ENCODE measurements at regions of chr20 and their contacts with region 1.

Region 1: DNA sequence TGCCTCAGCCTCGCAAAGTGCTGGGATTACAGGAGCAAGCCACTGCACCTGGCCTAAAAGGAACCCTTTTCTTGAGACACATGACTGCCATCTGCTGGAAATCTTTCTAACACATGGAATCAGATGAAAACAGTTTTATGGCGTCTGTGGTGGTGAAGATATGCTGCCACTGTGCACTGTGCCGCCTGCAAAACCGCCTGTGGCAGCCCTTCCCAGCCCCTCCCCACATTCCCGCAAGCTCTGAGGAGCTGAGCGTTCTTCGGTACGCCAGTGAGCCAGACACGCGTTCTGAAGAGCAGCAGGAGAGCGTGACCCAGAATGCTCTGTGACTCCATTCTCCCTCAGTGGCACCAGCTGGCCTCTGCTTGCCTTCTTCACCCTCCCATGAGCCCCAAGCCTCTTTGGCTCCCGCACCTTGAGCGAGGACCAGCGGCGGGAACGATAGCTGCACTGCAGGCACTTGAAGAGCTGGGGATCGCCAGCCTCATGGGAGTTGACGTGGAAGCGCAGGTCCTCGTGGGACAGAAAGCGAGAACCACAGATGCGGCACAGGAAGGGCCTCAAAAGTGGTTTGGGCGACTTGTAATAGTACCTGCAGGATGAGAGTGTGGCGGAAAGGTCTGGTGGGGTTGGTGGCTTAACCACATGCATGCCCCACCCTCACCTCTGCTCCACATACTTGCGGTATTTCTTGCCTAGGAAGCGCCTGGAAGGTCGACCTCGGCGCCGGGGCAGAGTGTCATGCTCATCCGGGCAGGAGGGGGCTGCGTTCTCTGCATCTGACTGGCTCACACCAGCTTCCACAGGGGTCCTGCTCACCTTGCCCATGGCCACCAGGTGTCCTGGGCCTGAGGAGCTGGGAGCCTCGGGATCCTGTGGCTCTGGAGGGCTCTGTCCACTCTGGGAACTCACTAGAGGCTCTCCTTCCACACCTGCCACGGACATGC is 8.7 kb downstream of the ZNF335 start:
- DNase-seq: no peak
- ATAC-seq: peak; percentile 43; the same call in 2 of the 3 replicates
- H3K4me3 ChIP-seq: no peak overlapping the region
- H3K27ac ChIP-seq: no peak overlapping the region
- H3K4me1 ChIP-seq: peaks cover 18% of the 10 kb centered on the region
- H3K27me3 ChIP-seq: no peaks in the 10 kb centered on the region
- CTCF ChIP-seq: peak in 2 of 3 experiments; percentile 31 to 51; a peak in 3 of 6 replicates
- EP300 ChIP-seq: no peak
- POLR2A ChIP-seq: no peak; the same call in 1 of the 2 replicates
- RAD21 ChIP-seq: peak; percentile 53

Region 2: GRCh38 chr20:45798935-45799642 is 164.2 kb before region 1 on chr20:
- CTCF ChIA-PET with region 1: interaction called, 120 read pairs
- POLR2A ChIA-PET with region 1: interaction called, 3 read pairs
- RAD21 ChIA-PET with region 1: interaction called, 22 read pairs
- SMC1A ChIA-PET with region 1: interaction called, 35 read pairs
- in situ Hi-C with region 1: no loop called
- intact Hi-C with region 1: loop called (anchors 1 kb)
- DNase-seq: no peak
- ATAC-seq: peak; percentile 99
- H3K4me3 ChIP-seq: no peak overlapping the region
- H3K27ac ChIP-seq: no peak overlapping the region
- H3K4me1 ChIP-seq: no peaks in the 10 kb centered on the region
- H3K27me3 ChIP-seq: no peaks in the 10 kb centered on the region
- CTCF ChIP-seq: peak; percentile 69 to 78 (median 73)
- EP300 ChIP-seq: no peak
- POLR2A ChIP-seq: no peak
- RAD21 ChIP-seq: peak; percentile 66

Region 3: GRCh38 chr20:45823949-45824835 is 139.1 kb before region 1 on chr20:
- CTCF ChIA-PET with region 1: interaction called, 12 read pairs
- POLR2A ChIA-PET with region 1: no interaction called
- RAD21 ChIA-PET with region 1: interaction called, 5 read pairs
- SMC1A ChIA-PET with region 1: interaction called, 6 read pairs
- in situ Hi-C with region 1: no loop called
- intact Hi-C with region 1: no loop called
- DNase-seq: no peak
- ATAC-seq: peak; percentile 85
- H3K4me3 ChIP-seq: no peak overlapping the region
- H3K27ac ChIP-seq: no peak overlapping the region
- H3K4me1 ChIP-seq: peaks cover 5% of the 10 kb centered on the region; the same call in 1 of the 2 replicates
- H3K27me3 ChIP-seq: no peaks in the 10 kb centered on the region; a peak in 2 of 4 replicates
- CTCF ChIP-seq: peak; percentile 28 to 54 (median 51); a peak in 4 of 6 replicates
- EP300 ChIP-seq: no peak
- POLR2A ChIP-seq: no peak
- RAD21 ChIP-seq: no peak

Region 4: DNA sequence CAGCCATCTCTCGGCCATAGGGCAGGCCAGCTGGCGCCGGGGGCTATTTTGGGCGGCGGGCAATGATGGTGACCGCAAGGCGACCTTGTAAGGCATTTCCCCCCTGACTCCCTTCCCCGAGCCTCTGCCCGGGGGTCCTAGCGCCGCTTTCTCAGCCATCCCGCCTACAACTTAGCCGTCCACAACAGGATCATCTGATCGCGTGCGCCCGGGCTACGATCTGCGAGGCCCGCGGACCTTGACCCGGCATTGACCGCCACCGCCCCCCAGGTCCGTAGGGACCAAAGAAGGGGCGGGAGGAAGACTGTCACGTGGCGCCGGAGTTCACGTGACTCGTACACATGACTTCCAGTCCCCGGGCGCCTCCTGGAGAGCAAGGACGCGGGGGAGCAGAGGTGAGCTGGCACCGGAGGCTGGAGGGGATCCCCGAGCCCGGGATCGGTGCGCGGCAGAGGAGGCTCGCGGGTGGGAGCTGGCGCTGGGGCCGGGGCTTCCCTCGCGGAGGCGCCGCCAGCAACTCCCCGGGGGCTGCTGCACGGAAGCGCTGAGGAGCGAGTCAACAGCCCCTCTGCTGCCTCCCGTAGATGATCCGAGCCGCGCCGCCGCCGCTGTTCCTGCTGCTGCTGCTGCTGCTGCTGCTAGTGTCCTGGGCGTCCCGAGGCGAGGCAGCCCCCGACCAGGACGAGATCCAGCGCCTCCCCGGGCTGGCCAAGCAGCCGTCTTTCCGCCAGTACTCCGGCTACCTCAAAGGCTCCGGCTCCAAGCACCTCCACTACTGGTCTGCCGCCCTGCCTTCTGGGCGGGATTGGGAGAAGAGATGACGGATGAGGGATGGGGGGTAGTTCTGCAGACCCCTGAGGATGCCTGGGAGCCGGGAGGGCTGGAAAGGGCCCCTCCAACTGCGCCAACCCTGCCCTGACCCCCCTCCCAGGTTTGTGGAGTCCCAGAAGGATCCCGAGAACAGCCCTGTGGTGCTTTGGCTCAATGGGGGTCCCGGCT is 72.0 kb before region 1 on chr20 and contains the starts of genes CTSA and NEURL2:
- CTCF ChIA-PET with region 1: interaction called, 17 read pairs
- POLR2A ChIA-PET with region 1: interaction called, 5 read pairs
- RAD21 ChIA-PET with region 1: interaction called, 8 read pairs
- SMC1A ChIA-PET with region 1: interaction called, 5 read pairs
- in situ Hi-C with region 1: no loop called
- intact Hi-C with region 1: no loop called
- DNase-seq: peak; percentile 51
- ATAC-seq: peak; percentile 87
- H3K4me3 ChIP-seq: peak within 1 kb of the TSS; percentile 83
- H3K27ac ChIP-seq: peak within 1 kb of the TSS; percentile 75
- H3K4me1 ChIP-seq: peaks cover 22% of the 10 kb centered on the region
- H3K27me3 ChIP-seq: no peaks in the 10 kb centered on the region
- CTCF ChIP-seq: peak in 1 of 3 experiments; percentile 26; a peak in 1 of 6 replicates
- EP300 ChIP-seq: peak; percentile 43 to 62; a peak in 2 of 4 replicates
- POLR2A ChIP-seq: peak; percentile 88
- RAD21 ChIP-seq: 0 out of 2 replicates have a peak, but pooled peaks have one; percentile 9
- polyA plus RNA-seq, gene CTSA: 7.1 to 8.6 TPM
- polyA plus RNA-seq, gene NEURL2: 0.97 to 1.8 TPM

Region 5: DNA sequence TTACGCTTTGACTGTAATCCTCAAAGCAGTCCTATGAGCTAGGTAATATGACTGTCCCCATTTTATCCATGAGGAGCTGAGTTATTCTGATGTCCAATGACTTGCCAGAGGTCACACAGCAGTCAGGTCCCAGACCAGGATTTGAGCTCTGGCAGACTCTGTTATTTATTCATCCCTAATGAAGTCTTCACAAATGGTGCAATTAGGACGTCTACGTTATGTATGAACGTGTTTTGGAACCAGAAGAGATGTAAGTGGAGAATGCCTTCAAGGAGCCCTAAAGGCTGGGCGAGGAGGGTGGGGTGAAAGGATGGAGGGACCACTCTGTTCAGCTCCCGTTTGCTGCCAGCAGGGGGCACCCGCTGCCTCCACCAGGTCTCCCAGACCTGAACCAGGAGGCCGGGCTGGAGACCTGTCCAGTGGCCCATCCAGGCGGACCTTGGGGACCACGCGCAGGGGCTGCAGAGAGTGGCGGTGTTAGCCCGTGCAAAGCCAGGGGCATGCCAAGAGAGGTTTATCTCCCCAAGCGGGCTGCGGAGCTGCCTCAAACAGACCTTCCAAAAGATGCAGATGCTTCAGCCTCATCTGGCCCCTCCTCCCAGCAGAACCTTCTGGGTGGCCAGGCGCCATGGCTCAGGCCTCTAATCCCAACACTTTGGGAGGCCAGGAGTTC is 23.9 kb after region 1 on chr20:
- CTCF ChIA-PET with region 1: interaction called, 151 read pairs
- POLR2A ChIA-PET with region 1: no interaction called
- RAD21 ChIA-PET with region 1: interaction called, 20 read pairs
- SMC1A ChIA-PET with region 1: interaction called, 4 read pairs
- in situ Hi-C with region 1: no loop called
- intact Hi-C with region 1: no loop called
- DNase-seq: no peak
- ATAC-seq: peak; percentile 100
- H3K4me3 ChIP-seq: no peak overlapping the region
- H3K27ac ChIP-seq: no peak overlapping the region
- H3K4me1 ChIP-seq: peaks cover 6% of the 10 kb centered on the region
- H3K27me3 ChIP-seq: no peaks in the 10 kb centered on the region; a peak in 1 of 4 replicates
- CTCF ChIP-seq: peak; percentile 92 to 96 (median 93)
- EP300 ChIP-seq: no peak
- POLR2A ChIP-seq: no peak
- RAD21 ChIP-seq: peak; percentile 83

Region 6: GRCh38 chr20:46057856-46058598 is 94.7 kb after region 1 on chr20:
- CTCF ChIA-PET with region 1: no interaction called
- POLR2A ChIA-PET with region 1: no interaction called
- RAD21 ChIA-PET with region 1: no interaction called
- SMC1A ChIA-PET with region 1: no interaction called
- in situ Hi-C with region 1: no loop called
- intact Hi-C with region 1: no loop called
- DNase-seq: no peak
- ATAC-seq: no peak
- H3K4me3 ChIP-seq: no peak overlapping the region
- H3K27ac ChIP-seq: no peak overlapping the region
- H3K4me1 ChIP-seq: peaks cover 13% of the 10 kb centered on the region; the same call in 1 of the 2 replicates
- H3K27me3 ChIP-seq: no peaks in the 10 kb centered on the region
- CTCF ChIP-seq: no peak
- EP300 ChIP-seq: no peak
- POLR2A ChIP-seq: no peak
- RAD21 ChIP-seq: no peak

Measured in GM12878 (cell line).